ENCODE measurements at regions of chr4 and their contacts with region 1.

Region 1: DNA sequence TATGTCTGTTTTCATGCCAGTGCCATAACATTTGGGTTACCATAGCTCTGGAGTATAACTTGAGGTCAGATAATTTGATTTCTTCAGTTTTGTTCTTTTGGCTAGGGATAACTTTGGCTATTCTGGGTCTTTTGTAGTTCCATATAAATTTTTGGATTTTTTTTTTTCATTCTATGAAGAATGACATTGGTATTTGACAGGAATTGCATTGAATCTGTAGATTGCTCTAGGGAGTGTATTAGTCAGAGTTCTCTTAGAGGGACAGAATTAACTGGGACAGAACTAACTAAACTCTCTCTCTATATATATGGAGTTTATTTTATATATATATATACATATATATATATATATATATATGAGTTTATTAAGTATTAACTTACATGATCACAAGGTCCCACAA is 32.2 kb upstream of the SLIT2 start:
- DNase-seq: no peak

Region 2: DNA sequence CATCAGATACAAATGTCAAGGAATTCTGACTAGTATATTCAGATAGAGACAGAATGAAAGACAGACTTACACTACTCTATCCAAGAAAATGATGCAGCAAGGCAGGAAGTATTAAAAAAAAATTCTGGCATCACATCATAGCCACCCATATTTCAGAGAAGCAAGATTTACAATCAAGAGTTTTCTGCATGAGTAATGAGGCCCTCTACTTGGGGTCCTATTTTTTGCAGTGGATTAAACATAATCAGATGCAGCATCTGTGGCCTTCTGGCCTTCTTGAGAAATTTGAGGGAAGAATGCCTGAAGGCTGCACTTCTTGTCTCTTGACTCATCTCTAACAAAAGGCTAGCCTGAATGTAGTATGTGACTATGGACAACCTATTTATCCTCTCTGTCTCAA is 16.0 kb before region 1 on chr4:
- intact Hi-C with region 1: loop called in 1 of 2 experiments (anchors 1 kb)
- DNase-seq: no peak

Region 3: DNA sequence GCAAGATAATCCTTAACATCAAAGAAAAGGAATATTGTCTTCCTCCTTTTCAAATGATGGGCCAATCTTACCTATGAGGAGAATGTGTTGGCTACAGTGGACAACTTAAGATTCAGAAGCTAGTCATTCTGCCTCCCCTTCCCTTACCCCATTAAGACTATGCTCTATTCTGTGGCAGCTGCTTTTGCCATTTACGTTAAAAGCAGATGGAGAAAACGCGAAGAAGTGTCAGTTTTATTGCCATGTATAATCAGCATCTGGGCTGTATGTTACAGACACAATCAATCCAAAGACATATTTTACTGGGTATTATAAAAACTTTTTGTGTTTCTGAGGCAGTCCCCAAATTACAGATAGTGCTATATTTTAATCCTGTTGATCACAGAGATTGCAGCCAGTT is 284.6 kb after region 1 on chr4:
- intact Hi-C with region 1: no loop called
- DNase-seq: no peak

Measured in posterior vena cava (tissue), 2 donors.